ENCODE measurements at regions of chr5 and their contacts with region 1.

Region 1: DNA sequence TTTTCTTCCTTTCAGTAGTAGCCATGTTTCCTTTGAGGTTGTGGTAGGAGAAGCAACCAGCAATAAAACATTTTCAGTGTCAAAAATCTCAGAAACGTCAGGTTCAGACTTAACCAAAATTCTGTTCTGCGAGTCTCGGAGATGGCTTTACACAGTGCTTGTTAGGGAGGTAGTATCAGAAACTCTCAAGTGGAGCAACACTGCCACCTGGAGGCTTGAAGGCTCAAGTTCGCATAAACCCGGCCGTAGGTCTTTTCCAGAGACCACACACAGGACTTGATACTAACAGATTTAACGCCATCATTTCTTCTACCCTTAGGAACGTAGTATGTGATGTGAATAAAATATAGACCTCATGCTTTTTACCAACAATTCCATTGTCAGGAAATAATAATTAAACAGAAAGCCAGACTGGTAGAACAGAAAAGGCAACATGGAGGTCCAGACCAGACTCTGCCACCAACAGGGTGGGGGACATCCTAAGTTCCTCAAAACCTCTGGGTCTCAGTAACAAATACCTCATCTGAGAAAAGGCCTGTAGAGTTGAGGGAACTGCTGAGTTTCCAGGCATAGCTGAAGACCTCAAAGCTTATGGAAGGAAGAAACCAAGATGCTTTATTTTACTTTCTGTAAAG is 8.5 kb downstream of the PTGER4 start:
- DNase-seq: peak; percentile 65
- CTCF ChIP-seq: peak; percentile 80

Region 2: GRCh38 chr5:39714036-39714698 is 974.1 kb before region 1 on chr5:
- CTCF ChIA-PET with region 1: interaction called, 13 read pairs
- POLR2A ChIA-PET with region 1: no interaction called
- DNase-seq: peak; percentile 13
- CTCF ChIP-seq: peak; percentile 42

Region 3: GRCh38 chr5:40798012-40798855 is 110.0 kb after region 1 on chr5 and contains the start of gene PRKAA1:
- CTCF ChIA-PET with region 1: no interaction called
- POLR2A ChIA-PET with region 1: no interaction called
- DNase-seq: peak; percentile 92
- CTCF ChIP-seq: peak; percentile 73

Measured in GM10248 (cell line).